Naive thymus-derived CD4-positive, alpha-beta T cell (primary cell): ENCODE measurements at regions of chr2 and their contacts with region 1.

Region 1: DNA sequence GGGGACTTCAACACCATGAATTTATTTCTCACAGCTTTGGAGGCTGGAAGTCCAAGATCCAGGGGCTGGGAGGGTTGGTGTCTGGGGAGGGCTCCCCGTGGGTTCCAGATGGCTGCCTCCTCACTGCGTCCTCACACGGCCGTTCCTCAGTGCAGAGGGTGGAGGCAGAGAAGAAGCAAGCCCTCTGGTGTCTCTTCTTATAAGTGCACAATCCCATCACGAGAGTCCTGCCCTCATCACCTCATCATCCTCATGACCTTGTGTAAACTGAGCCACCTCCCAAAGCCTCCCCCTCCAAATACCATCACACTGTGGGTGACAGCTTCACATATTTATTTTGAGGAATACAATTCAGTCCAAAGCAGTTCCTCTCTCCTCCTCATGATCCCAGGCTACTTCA is 26.3 kb downstream of the TMEM163 start:
- DNase-seq: peak in 2 of 9 donors; percentile 14 to 33
- ATAC-seq: peak; percentile 60
- H3K4me3 ChIP-seq: no peak overlapping the region
- H3K4me3 Mint-ChIP-seq: no peak overlapping the region
- H3K27ac ChIP-seq: no peak overlapping the region
- H3K27ac Mint-ChIP-seq: no peak overlapping the region
- H3K4me1 ChIP-seq: no peaks in the 10 kb centered on the region
- H3K4me1 Mint-ChIP-seq: no peaks in the 10 kb centered on the region
- H3K27me3 ChIP-seq: no peaks in the 10 kb centered on the region
- H3K27me3 Mint-ChIP-seq: peaks cover 0 to 25% (median 0%) of the 10 kb centered on the region in 5 donors

Region 2: DNA sequence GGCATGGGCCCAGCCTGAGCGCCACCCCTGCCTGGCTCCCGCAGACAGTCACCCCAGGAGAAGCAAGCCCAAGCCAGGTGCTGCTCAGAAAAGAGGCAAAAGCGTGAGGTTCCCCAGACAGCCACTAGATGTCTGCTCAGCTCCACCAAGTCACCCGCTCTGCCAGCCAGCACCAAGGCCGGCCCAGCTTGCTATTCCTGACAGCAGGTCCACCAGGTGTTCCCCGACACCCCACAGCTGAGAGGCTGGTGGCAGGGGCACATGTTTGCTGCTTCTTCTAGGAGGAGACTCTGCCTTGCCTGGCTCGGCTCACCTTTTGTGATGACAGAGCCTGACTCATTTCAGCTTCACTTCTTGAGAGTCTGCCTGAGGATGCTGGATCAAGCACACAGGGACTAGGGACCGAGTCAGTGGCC is 231.9 kb before region 1 on chr2:
- CTCF ChIA-PET with region 1: no interaction called
- POLR2A ChIA-PET with region 1: no interaction called
- intact Hi-C with region 1: loop called in 1 of 2 experiments (anchors 10 kb)
- DNase-seq: peak in 6 of 9 donors; percentile 12 to 33 (median 21)
- ATAC-seq: peak; percentile 41
- H3K4me3 ChIP-seq: no peak overlapping the region
- H3K4me3 Mint-ChIP-seq: no peak overlapping the region
- H3K27ac ChIP-seq: no peak overlapping the region
- H3K27ac Mint-ChIP-seq: no peak overlapping the region
- H3K4me1 ChIP-seq: no peaks in the 10 kb centered on the region
- H3K4me1 Mint-ChIP-seq: no peaks in the 10 kb centered on the region
- H3K27me3 ChIP-seq: no peaks in the 10 kb centered on the region
- H3K27me3 Mint-ChIP-seq: no peaks in the 10 kb centered on the region

Region 3: GRCh38 chr2:134466141-134466540 is 226.4 kb before region 1 on chr2:
- CTCF ChIA-PET with region 1: no interaction called
- POLR2A ChIA-PET with region 1: no interaction called
- intact Hi-C with region 1: loop called in 1 of 2 experiments (anchors 1 kb)
- DNase-seq: peak in 4 of 9 donors; percentile 14 to 31 (median 18)
- ATAC-seq: no peak
- H3K4me3 ChIP-seq: no peak overlapping the region
- H3K4me3 Mint-ChIP-seq: no peak overlapping the region
- H3K27ac ChIP-seq: no peak overlapping the region
- H3K27ac Mint-ChIP-seq: peak overlapping the region in 1 of 9 donors; percentile 86
- H3K4me1 ChIP-seq: no peaks in the 10 kb centered on the region
- H3K4me1 Mint-ChIP-seq: no peaks in the 10 kb centered on the region
- H3K27me3 ChIP-seq: no peaks in the 10 kb centered on the region
- H3K27me3 Mint-ChIP-seq: no peaks in the 10 kb centered on the region

Region 4: GRCh38 chr2:134574611-134575330 is 117.7 kb before region 1 on chr2:
- CTCF ChIA-PET with region 1: no interaction called
- POLR2A ChIA-PET with region 1: no interaction called
- intact Hi-C with region 1: loop called in 1 of 2 experiments (anchors 1 kb)
- DNase-seq: no peak
- ATAC-seq: no peak
- H3K4me3 ChIP-seq: no peak overlapping the region
- H3K4me3 Mint-ChIP-seq: no peak overlapping the region
- H3K27ac ChIP-seq: no peak overlapping the region
- H3K27ac Mint-ChIP-seq: no peak overlapping the region
- H3K4me1 ChIP-seq: no peaks in the 10 kb centered on the region
- H3K4me1 Mint-ChIP-seq: peaks cover 0 to 1% (median 0%) of the 10 kb centered on the region in 7 donors
- H3K27me3 ChIP-seq: no peaks in the 10 kb centered on the region
- H3K27me3 Mint-ChIP-seq: peaks cover 0 to 7% (median 0%) of the 10 kb centered on the region in 5 donors

Region 5: GRCh38 chr2:134657637-134658250 is 34.8 kb before region 1 on chr2:
- CTCF ChIA-PET with region 1: interaction called, 3 read pairs
- POLR2A ChIA-PET with region 1: no interaction called
- intact Hi-C with region 1: loop called in 1 of 2 experiments (anchors 5 kb)
- DNase-seq: peak in 2 of 9 donors; percentile 15 to 18
- ATAC-seq: no peak
- H3K4me3 ChIP-seq: no peak overlapping the region
- H3K4me3 Mint-ChIP-seq: no peak overlapping the region
- H3K27ac ChIP-seq: no peak overlapping the region
- H3K27ac Mint-ChIP-seq: no peak overlapping the region
- H3K4me1 ChIP-seq: peaks cover 0 to 7% of the 10 kb centered on the region in 2 donors
- H3K4me1 Mint-ChIP-seq: peaks cover 9 to 39% (median 26%) of the 10 kb centered on the region in 7 donors
- H3K27me3 ChIP-seq: no peaks in the 10 kb centered on the region
- H3K27me3 Mint-ChIP-seq: peaks cover 0 to 11% (median 0%) of the 10 kb centered on the region in 5 donors